GM12878 (cell line): ENCODE measurements at regions of chr19 and their contacts with region 1.

Region 1: GRCh38 chr19:41541990-41542584 is 33.9 kb upstream of the CEACAM21 start:
- DNase-seq: no peak
- ATAC-seq: peak; percentile 49; the same call in 2 of the 3 replicates
- H3K4me3 ChIP-seq: no peak overlapping the region
- H3K27ac ChIP-seq: no peak overlapping the region
- H3K4me1 ChIP-seq: peaks cover 26% of the 10 kb centered on the region
- H3K27me3 ChIP-seq: no peaks in the 10 kb centered on the region
- CTCF ChIP-seq: peak; percentile 69 to 74 (median 71)
- EP300 ChIP-seq: no peak
- POLR2A ChIP-seq: no peak
- RAD21 ChIP-seq: peak; percentile 85

Region 2: DNA sequence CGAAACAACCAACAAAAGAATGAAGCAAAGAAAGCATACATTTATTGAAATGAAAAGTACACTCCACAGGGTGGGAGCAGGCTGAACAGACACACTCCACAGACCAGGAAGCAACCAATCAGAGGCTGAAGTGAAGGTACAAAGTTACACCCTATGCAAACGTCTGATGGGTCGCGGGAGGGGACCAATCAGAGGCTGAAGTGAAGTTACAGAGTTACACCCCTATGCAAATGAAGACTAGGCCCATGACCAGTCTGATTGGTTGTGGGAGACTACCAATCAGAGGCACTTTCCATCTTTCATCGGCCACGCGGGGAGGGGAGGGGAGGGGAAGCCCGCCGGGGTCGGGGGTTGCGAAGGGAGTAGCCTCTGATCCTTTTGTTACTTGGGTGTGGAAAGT is 1683.5 kb before region 1 on chr19:
- CTCF ChIA-PET with region 1: no interaction called
- POLR2A ChIA-PET with region 1: no interaction called
- RAD21 ChIA-PET with region 1: no interaction called
- SMC1A ChIA-PET with region 1: no interaction called
- in situ Hi-C with region 1: no loop called
- intact Hi-C with region 1: no loop called
- DNase-seq: no peak
- ATAC-seq: no peak
- H3K4me3 ChIP-seq: no peak overlapping the region
- H3K27ac ChIP-seq: no peak overlapping the region
- H3K4me1 ChIP-seq: no peaks in the 10 kb centered on the region
- H3K27me3 ChIP-seq: no peaks in the 10 kb centered on the region
- CTCF ChIP-seq: no peak
- EP300 ChIP-seq: no peak
- POLR2A ChIP-seq: no peak
- RAD21 ChIP-seq: no peak

Region 3: DNA sequence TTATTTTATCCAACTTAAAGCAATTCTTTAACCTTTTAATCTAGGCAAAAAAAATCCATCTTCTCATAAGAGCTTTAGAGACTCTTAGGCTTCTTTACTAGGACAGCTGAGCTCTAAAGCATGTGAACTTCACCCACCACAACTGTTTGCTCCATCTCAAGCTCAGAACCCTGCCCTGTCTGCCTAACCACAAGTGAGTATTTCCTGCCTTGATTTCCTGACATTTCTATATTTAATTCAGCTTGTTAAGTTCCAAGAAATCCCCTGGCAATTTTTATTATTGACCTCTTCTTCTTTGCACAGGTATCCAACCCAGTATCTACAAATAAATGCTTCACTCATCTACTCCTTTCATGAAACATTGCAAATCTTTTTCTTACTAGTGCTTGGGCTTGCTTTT is 12.8 kb after region 1 on chr19:
- CTCF ChIA-PET with region 1: interaction called, 549 read pairs
- POLR2A ChIA-PET with region 1: interaction called, 14 read pairs
- RAD21 ChIA-PET with region 1: interaction called, 12 read pairs
- SMC1A ChIA-PET with region 1: interaction called, 305 read pairs
- in situ Hi-C with region 1: no loop called
- intact Hi-C with region 1: no loop called
- DNase-seq: no peak
- ATAC-seq: no peak
- H3K4me3 ChIP-seq: peak overlapping the region; percentile 8; the same call in 1 of the 2 replicates
- H3K27ac ChIP-seq: no peak overlapping the region
- H3K4me1 ChIP-seq: peaks cover 24% of the 10 kb centered on the region
- H3K27me3 ChIP-seq: no peaks in the 10 kb centered on the region
- CTCF ChIP-seq: no peak
- EP300 ChIP-seq: no peak
- POLR2A ChIP-seq: no peak
- RAD21 ChIP-seq: no peak

Region 4: DNA sequence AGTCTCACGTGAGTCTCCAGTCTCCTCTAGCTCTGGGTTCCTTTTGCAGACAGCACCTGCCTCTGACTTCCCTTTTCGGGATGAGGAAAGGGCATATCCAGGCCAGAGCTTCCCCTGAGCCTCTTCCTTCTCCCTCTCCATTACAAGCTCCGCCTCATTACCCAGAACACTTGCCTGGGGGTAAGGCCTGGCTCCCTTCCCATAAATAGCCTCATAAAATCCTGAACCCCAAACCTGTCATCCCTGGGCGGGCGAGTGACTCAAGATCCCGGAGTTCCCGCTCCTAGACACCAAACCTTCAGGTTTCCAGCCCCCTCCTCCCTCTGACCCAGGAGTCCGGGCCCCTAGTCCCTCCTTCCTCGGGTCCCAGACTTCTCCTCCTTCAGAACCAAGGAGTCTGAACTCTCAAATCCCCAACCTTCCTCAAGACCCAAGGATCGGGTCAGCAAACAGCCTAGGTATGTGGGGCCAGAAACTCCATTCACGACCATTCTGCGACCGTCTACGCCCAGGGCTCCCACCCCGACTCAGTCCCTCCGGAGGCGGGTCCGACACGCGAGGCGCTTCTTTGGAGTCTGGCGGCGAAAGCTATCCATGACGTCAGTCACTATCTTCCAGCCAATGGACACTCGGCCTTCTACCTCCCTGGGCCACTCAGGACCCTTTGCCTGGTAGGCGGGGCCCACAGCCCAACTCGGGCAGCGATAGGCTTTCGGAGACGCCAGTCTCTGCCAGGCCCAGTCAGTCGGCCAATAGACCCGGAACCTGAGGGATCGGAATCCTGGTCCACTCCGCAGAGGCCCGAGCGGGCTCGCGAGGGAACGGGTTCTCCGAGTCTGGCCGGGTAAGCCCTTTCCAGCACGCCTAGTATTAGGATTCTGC is 854.5 kb after region 1 on chr19:
- CTCF ChIA-PET with region 1: no interaction called
- POLR2A ChIA-PET with region 1: no interaction called
- RAD21 ChIA-PET with region 1: no interaction called
- SMC1A ChIA-PET with region 1: no interaction called
- in situ Hi-C with region 1: no loop called
- intact Hi-C with region 1: no loop called
- DNase-seq: peak; percentile 98
- ATAC-seq: peak; percentile 99
- H3K4me3 ChIP-seq: peak overlapping the region; percentile 97
- H3K27ac ChIP-seq: peak overlapping the region; percentile 80
- H3K4me1 ChIP-seq: peaks cover 8% of the 10 kb centered on the region
- H3K27me3 ChIP-seq: no peaks in the 10 kb centered on the region
- CTCF ChIP-seq: no peak
- EP300 ChIP-seq: no peak
- POLR2A ChIP-seq: peak; percentile 89
- RAD21 ChIP-seq: no peak